CD4-positive, alpha-beta T cell (primary cell): ENCODE measurements at regions of chr18 and their contacts with region 1.

Region 1: GRCh38 chr18:62714671-62715435 is 488 bp upstream of the PHLPP1 start:
- DNase-seq: peak; percentile 82 to 98 (median 90)
- ATAC-seq: peak; percentile 71
- H3K4me3 ChIP-seq: peak overlapping the region; percentile 63
- H3K4me3 Mint-ChIP-seq: peak overlapping the region; percentile 94
- H3K27ac ChIP-seq: peak overlapping the region; percentile 71 to 84
- H3K27ac Mint-ChIP-seq: peak overlapping the region; percentile 98
- H3K4me1 ChIP-seq: peaks cover 15% of the 10 kb centered on the region
- H3K4me1 Mint-ChIP-seq: peaks cover 30% of the 10 kb centered on the region
- H3K27me3 ChIP-seq: no peaks in the 10 kb centered on the region
- H3K27me3 Mint-ChIP-seq: no peaks in the 10 kb centered on the region
- CTCF ChIP-seq: peak; percentile 73

Region 2: GRCh38 chr18:62372156-62372555 is 342.7 kb before region 1 on chr18:
- CTCF ChIA-PET with region 1: no interaction called
- POLR2A ChIA-PET with region 1: no interaction called
- intact Hi-C with region 1: no loop called
- DNase-seq: no peak
- ATAC-seq: no peak
- H3K4me3 ChIP-seq: no peak overlapping the region
- H3K4me3 Mint-ChIP-seq: no peak overlapping the region
- H3K27ac ChIP-seq: no peak overlapping the region
- H3K27ac Mint-ChIP-seq: no peak overlapping the region
- H3K4me1 ChIP-seq: no peaks in the 10 kb centered on the region
- H3K4me1 Mint-ChIP-seq: peaks cover 4% of the 10 kb centered on the region
- H3K27me3 ChIP-seq: no peaks in the 10 kb centered on the region
- H3K27me3 Mint-ChIP-seq: no peaks in the 10 kb centered on the region
- CTCF ChIP-seq: no peak

Region 3: GRCh38 chr18:62425465-62426195 is 289.2 kb before region 1 on chr18:
- CTCF ChIA-PET with region 1: no interaction called
- POLR2A ChIA-PET with region 1: interaction called, 11 read pairs
- intact Hi-C with region 1: loop called in 1 of 2 experiments (anchors 5 kb)
- DNase-seq: peak in 13 of 14 experiments; percentile 5 to 85 (median 31)
- ATAC-seq: peak; percentile 51
- H3K4me3 ChIP-seq: no peak overlapping the region
- H3K4me3 Mint-ChIP-seq: no peak overlapping the region
- H3K27ac ChIP-seq: no peak overlapping the region
- H3K27ac Mint-ChIP-seq: no peak overlapping the region
- H3K4me1 ChIP-seq: peaks cover 12% of the 10 kb centered on the region
- H3K4me1 Mint-ChIP-seq: peaks cover 18% of the 10 kb centered on the region
- H3K27me3 ChIP-seq: no peaks in the 10 kb centered on the region
- H3K27me3 Mint-ChIP-seq: no peaks in the 10 kb centered on the region
- CTCF ChIP-seq: peak; percentile 83

Region 4: GRCh38 chr18:62584241-62585120 is 130.4 kb before region 1 on chr18:
- CTCF ChIA-PET with region 1: interaction called, 4 read pairs
- POLR2A ChIA-PET with region 1: interaction called, 4 read pairs
- intact Hi-C with region 1: loop called in 1 of 2 experiments (anchors 5 kb)
- DNase-seq: peak; percentile 69 to 92 (median 78)
- ATAC-seq: peak; percentile 97
- H3K4me3 ChIP-seq: no peak overlapping the region
- H3K4me3 Mint-ChIP-seq: peak overlapping the region; percentile 16
- H3K27ac ChIP-seq: no peak overlapping the region
- H3K27ac Mint-ChIP-seq: peak overlapping the region; percentile 32
- H3K4me1 ChIP-seq: peaks cover 28% of the 10 kb centered on the region
- H3K4me1 Mint-ChIP-seq: peaks cover 33% of the 10 kb centered on the region
- H3K27me3 ChIP-seq: no peaks in the 10 kb centered on the region
- H3K27me3 Mint-ChIP-seq: no peaks in the 10 kb centered on the region
- CTCF ChIP-seq: peak; percentile 98

Region 5: GRCh38 chr18:62610701-62611411 is 104.0 kb before region 1 on chr18:
- CTCF ChIA-PET with region 1: no interaction called
- POLR2A ChIA-PET with region 1: no interaction called
- intact Hi-C with region 1: no loop called
- DNase-seq: no peak
- ATAC-seq: no peak
- H3K4me3 ChIP-seq: no peak overlapping the region
- H3K4me3 Mint-ChIP-seq: no peak overlapping the region
- H3K27ac ChIP-seq: no peak overlapping the region
- H3K27ac Mint-ChIP-seq: no peak overlapping the region
- H3K4me1 ChIP-seq: no peaks in the 10 kb centered on the region
- H3K4me1 Mint-ChIP-seq: no peaks in the 10 kb centered on the region
- H3K27me3 ChIP-seq: peaks cover 0 to 10% of the 10 kb centered on the region in 2 experiments
- H3K27me3 Mint-ChIP-seq: peaks cover 23% of the 10 kb centered on the region
- CTCF ChIP-seq: no peak

Region 6: DNA sequence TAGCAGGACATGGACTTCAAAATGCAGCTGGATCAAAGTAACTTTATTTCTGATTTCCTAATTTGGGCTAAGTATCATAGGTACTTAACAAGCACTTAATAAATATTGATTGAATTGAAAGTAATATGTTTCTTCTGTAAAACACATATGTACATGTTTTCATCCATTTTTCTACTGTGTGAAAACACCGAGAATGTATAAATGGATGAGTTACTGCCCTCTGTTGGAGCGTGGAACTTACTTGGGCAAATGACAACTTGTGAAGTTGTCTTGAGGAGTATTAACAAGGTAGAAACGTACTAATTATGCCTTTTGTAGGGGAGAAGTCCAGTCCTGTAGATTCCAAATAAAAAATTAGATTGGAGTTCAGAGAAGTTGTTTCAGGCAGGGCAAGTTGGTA is 87.7 kb after region 1 on chr18:
- CTCF ChIA-PET with region 1: no interaction called
- POLR2A ChIA-PET with region 1: no interaction called
- intact Hi-C with region 1: loop called in 1 of 2 experiments (anchors 1 kb)
- DNase-seq: peak in 2 of 14 experiments; percentile 16 to 19
- ATAC-seq: no peak
- H3K4me3 ChIP-seq: no peak overlapping the region
- H3K4me3 Mint-ChIP-seq: no peak overlapping the region
- H3K27ac ChIP-seq: no peak overlapping the region
- H3K27ac Mint-ChIP-seq: no peak overlapping the region
- H3K4me1 ChIP-seq: no peaks in the 10 kb centered on the region
- H3K4me1 Mint-ChIP-seq: no peaks in the 10 kb centered on the region
- H3K27me3 ChIP-seq: no peaks in the 10 kb centered on the region
- H3K27me3 Mint-ChIP-seq: no peaks in the 10 kb centered on the region
- CTCF ChIP-seq: no peak

Region 7: GRCh38 chr18:62844850-62845643 is 130.2 kb after region 1 on chr18:
- CTCF ChIA-PET with region 1: no interaction called
- POLR2A ChIA-PET with region 1: no interaction called
- intact Hi-C with region 1: no loop called
- DNase-seq: no peak
- ATAC-seq: no peak
- H3K4me3 ChIP-seq: peak overlapping the region; percentile 3
- H3K4me3 Mint-ChIP-seq: no peak overlapping the region
- H3K27ac ChIP-seq: no peak overlapping the region
- H3K27ac Mint-ChIP-seq: no peak overlapping the region
- H3K4me1 ChIP-seq: peaks cover 3% of the 10 kb centered on the region
- H3K4me1 Mint-ChIP-seq: no peaks in the 10 kb centered on the region
- H3K27me3 ChIP-seq: no peaks in the 10 kb centered on the region
- H3K27me3 Mint-ChIP-seq: no peaks in the 10 kb centered on the region
- CTCF ChIP-seq: no peak

Region 8: DNA sequence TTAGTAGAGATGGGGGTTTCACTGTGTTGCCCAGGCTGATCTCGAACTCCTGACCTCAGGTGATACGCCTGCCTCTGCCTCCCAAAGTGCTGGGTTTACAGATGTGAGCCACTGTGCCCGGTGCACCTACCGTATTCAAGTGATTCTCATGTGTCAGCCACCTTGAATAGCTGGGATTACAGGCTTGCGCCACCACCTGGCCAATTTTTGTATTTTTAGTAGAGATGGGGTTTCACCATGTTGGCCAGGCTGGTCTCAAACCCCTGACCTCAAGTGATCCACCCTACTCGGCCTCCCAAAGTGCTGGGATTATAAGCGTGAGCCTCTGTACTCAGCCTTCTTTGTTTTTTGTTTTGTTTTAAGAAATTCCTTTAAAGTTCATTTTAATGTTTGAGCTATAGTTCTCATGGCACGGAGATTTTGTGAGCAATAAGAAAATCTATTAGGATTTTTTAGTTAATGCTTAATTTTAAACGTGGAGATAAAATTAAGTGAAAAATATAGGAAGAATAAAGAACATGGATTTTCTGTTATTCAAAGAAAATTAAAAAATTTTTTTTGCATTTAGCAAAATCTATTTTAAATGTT is 243.1 kb after region 1 on chr18:
- CTCF ChIA-PET with region 1: interaction called, 10 read pairs
- POLR2A ChIA-PET with region 1: interaction called, 4 read pairs
- intact Hi-C with region 1: loop called in 1 of 2 experiments (anchors 5 kb)
- DNase-seq: peak in 8 of 14 experiments; percentile 6 to 55 (median 30)
- ATAC-seq: no peak
- H3K4me3 ChIP-seq: no peak overlapping the region
- H3K4me3 Mint-ChIP-seq: no peak overlapping the region
- H3K27ac ChIP-seq: no peak overlapping the region
- H3K27ac Mint-ChIP-seq: no peak overlapping the region
- H3K4me1 ChIP-seq: peaks cover 6% of the 10 kb centered on the region
- H3K4me1 Mint-ChIP-seq: peaks cover 20% of the 10 kb centered on the region
- H3K27me3 ChIP-seq: no peaks in the 10 kb centered on the region
- H3K27me3 Mint-ChIP-seq: no peaks in the 10 kb centered on the region
- CTCF ChIP-seq: no peak

Region 9: DNA sequence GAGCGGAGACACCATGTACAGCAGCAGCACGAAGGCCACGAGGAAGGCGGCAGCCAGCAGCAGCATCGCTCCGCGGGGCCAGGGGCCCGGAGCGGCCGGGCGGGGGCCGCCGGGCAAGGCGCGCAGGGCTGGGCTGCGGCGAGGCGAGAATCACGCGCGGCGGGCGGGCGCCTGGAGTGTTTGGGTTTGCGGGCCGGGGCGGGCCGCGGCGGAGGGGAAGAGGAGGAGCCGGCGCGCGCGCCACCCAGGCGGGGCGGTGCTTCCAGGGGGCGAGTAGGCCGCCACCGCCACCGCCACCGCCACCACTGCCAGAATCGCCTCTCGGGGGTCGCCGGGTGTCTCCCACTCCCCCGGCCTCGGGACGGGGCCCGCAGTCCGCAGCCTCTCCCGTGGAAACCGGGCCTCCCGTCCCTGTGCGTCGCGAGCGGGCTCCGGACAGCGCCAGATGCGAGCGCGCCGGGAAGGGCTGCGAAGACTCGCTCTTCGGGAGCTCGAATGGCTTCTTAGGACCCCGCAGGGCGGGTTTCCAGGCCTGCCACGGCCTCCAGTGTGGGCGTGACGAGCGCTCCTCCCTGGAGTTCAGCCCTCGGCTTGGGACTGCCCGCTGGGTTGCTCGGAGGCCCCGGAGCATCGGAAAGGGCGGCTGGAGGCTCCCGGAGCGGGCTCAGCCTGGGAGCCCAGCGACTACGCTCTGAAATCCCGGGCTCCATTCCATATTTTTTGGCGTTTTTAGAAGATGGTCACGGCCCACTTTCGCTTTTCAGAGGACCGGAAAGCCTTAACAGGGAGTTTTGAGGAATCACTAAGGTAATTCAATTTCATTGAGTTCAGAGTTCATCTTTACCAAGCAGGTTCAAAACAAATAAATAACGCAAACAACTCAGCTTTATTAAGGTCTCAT is 652.5 kb after region 1 on chr18 and contains the start of gene KDSR:
- CTCF ChIA-PET with region 1: no interaction called
- POLR2A ChIA-PET with region 1: interaction called, 4 read pairs
- intact Hi-C with region 1: loop called in 1 of 2 experiments (anchors 5 kb)
- DNase-seq: peak; percentile 63 to 91 (median 77)
- ATAC-seq: peak; percentile 80
- H3K4me3 ChIP-seq: peak within 1 kb of the TSS; percentile 94
- H3K4me3 Mint-ChIP-seq: peak within 1 kb of the TSS; percentile 94
- H3K27ac ChIP-seq: peak within 1 kb of the TSS; percentile 65 to 72
- H3K27ac Mint-ChIP-seq: peak within 1 kb of the TSS; percentile 91
- H3K4me1 ChIP-seq: peaks cover 33% of the 10 kb centered on the region
- H3K4me1 Mint-ChIP-seq: peaks cover 56% of the 10 kb centered on the region
- H3K27me3 ChIP-seq: no peaks in the 10 kb centered on the region
- H3K27me3 Mint-ChIP-seq: no peaks in the 10 kb centered on the region
- CTCF ChIP-seq: no peak
- total RNA-seq, gene KDSR: 21.1 to 23.5 TPM

Region 10: DNA sequence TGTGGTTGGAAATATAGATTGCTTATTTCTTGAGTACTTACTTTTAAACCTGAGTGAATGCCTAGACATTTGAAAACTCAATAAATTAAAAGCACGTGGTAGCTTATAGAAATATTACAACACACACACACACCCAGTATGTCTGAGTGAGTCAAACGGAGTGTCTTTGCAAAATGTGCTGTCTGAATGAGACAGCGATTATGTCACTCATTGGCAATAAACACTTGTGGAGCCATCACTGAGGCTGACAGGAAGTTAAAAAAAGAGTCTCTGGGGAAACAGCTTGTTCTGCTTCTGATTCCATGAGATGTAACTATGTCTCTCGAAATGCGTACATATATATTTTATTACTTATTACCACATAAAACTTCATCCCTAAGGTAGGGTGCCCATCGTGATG is 729.7 kb after region 1 on chr18:
- CTCF ChIA-PET with region 1: no interaction called
- POLR2A ChIA-PET with region 1: no interaction called
- intact Hi-C with region 1: loop called in 1 of 2 experiments (anchors 5 kb)
- DNase-seq: peak in 3 of 14 experiments; percentile 19 to 66 (median 58)
- ATAC-seq: no peak
- H3K4me3 ChIP-seq: no peak overlapping the region
- H3K4me3 Mint-ChIP-seq: no peak overlapping the region
- H3K27ac ChIP-seq: peak overlapping the region in 1 of 2 donors; percentile 6
- H3K27ac Mint-ChIP-seq: no peak overlapping the region
- H3K4me1 ChIP-seq: no peaks in the 10 kb centered on the region
- H3K4me1 Mint-ChIP-seq: no peaks in the 10 kb centered on the region
- H3K27me3 ChIP-seq: no peaks in the 10 kb centered on the region
- H3K27me3 Mint-ChIP-seq: no peaks in the 10 kb centered on the region
- CTCF ChIP-seq: no peak